ENCODE measurements at regions of chr11 and their contacts with region 1.

Region 1: GRCh38 chr11:127074151-127074761 is 73.7 kb upstream of the KIRREL3 start:
- DNase-seq: peak; percentile 45
- H3K4me3 ChIP-seq: no peak overlapping the region
- H3K27me3 ChIP-seq: peaks cover 11% of the 10 kb centered on the region
- CTCF ChIP-seq: peak; percentile 57

Region 2: DNA sequence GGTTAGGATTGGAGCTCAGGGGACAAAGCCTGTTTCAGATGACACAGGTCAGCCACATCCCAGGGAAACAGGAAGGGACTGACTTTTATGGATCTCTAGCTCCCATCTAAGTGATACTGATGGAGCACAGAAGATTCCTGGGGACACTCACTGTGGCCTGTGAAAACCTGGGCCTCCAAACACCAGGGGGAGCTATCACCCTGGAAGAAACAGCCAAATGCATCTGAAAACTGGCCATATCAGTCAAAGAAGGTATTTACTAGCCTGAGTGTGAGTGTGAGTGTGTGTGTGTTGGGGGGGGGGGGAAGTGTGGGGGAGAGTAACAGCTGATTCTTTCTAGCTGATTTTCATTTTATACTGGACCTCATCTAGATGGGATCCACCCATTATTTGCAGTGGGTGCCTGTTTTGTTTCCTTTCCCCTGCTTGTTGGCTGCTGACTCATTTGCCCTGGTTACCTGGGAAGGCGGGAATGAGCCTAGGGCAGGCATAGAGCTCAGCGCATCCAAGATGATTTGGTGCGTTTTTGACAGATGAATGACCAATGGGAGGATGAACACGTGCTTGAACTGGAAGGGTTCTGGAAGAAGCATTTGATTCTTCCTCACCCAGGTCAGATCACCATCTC is 357.7 kb before region 1 on chr11:
- CTCF ChIA-PET with region 1: interaction called, 16 read pairs
- POLR2A ChIA-PET with region 1: no interaction called
- DNase-seq: no peak
- H3K4me3 ChIP-seq: no peak overlapping the region
- H3K27me3 ChIP-seq: no peaks in the 10 kb centered on the region
- CTCF ChIP-seq: peak; percentile 69

Region 3: DNA sequence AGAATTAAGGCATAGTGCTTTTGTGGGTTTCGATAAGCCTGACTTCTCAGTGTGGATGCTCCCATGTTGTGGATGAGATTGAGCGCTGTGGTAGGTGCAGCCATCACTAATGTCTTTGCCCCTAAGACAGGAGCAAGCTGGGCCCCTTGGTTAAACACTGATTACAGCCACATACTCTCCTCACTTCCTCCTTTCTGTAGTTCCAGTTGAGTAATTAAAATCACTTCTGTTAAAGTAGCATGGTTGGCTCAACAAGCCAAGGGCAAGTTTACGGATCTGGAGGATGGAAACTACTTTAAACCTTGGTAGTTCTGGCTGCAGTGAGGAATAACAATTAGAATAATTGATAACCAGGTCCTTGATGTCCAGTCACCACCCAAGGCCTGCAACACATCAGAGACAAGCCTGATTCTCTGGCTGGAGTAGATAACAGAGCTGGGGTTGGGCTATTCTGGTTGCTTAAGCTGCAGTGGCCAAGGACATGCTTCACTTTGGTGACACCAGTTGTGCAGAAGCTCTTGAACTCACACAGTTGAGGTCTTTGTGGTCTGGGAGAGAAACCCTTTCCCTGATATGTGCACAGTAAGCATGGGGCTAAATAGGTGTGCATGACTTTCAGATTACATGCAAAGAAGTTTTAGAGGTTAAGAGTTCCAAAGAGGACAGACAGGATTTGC is 155.0 kb before region 1 on chr11:
- CTCF ChIA-PET with region 1: no interaction called
- POLR2A ChIA-PET with region 1: no interaction called
- DNase-seq: no peak
- H3K4me3 ChIP-seq: no peak overlapping the region
- H3K27me3 ChIP-seq: no peaks in the 10 kb centered on the region
- CTCF ChIP-seq: no peak

Region 4: DNA sequence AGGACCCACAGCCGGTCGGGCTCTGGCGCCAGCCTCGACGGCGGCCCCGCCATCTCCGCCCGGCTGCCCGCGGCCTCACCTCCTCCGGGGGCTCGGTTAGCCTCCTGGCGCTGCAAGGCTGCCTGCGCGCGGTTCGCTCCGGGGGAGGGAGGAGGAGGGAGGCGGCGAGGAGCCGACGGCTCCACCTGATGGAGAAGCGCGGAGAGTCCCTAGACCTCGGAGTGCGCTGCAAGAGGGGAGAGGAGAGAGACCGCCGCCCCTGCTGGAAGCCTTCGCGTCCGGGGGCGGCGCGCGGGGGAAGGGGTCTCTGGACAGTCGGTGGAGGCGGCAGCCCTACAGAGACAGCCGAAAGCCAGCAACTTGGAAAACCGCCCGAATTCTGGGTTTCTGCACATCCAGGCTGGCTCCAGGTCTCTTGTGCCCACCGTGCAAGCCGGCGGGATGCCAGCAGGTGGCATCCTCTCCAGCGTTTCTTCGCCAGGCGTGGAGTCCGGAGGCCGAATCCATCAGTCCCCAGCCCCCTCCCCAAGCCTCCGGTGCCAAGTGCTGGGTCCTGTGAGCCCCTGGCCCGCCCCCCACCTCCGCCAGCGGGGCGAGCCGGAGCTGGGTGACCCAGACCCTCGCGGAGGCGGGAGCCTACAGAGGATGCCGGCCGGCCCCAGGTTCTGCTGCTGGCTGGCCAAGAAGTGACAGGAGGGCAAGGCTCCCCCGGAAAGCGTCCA is 70.8 kb before region 1 on chr11:
- CTCF ChIA-PET with region 1: interaction called, 12 read pairs
- POLR2A ChIA-PET with region 1: no interaction called
- DNase-seq: no peak
- H3K4me3 ChIP-seq: peak overlapping the region; percentile 48
- H3K27me3 ChIP-seq: no peaks in the 10 kb centered on the region
- CTCF ChIP-seq: peak; percentile 56

Region 5: GRCh38 chr11:127063214-127063613 is 11.0 kb before region 1 on chr11:
- CTCF ChIA-PET with region 1: interaction called, 23 read pairs
- POLR2A ChIA-PET with region 1: no interaction called
- DNase-seq: no peak
- H3K4me3 ChIP-seq: no peak overlapping the region
- H3K27me3 ChIP-seq: peaks cover 19% of the 10 kb centered on the region
- CTCF ChIP-seq: no peak